ENCODE measurements at regions of chr9 and their contacts with region 1.

Region 1: GRCh38 chr9:90870621-90871326 is 69.2 kb downstream of the SYK start:
- DNase-seq: no peak
- ATAC-seq: no peak
- H3K4me3 Mint-ChIP-seq: no peak overlapping the region
- H3K27ac Mint-ChIP-seq: peak overlapping the region; percentile 74
- H3K4me1 Mint-ChIP-seq: peaks cover 4% of the 10 kb centered on the region
- H3K27me3 Mint-ChIP-seq: no peaks in the 10 kb centered on the region
- CTCF ChIP-seq: peak; percentile 97

Region 2: GRCh38 chr9:90322296-90322695 is 548.5 kb before region 1 on chr9:
- CTCF ChIA-PET with region 1: no interaction called
- POLR2A ChIA-PET with region 1: no interaction called
- intact Hi-C with region 1: loop called (anchors 5 kb)
- DNase-seq: no peak
- ATAC-seq: no peak
- H3K4me3 Mint-ChIP-seq: no peak overlapping the region
- H3K27ac Mint-ChIP-seq: no peak overlapping the region
- H3K4me1 Mint-ChIP-seq: no peaks in the 10 kb centered on the region
- H3K27me3 Mint-ChIP-seq: peaks cover 16% of the 10 kb centered on the region
- CTCF ChIP-seq: no peak

Region 3: GRCh38 chr9:90385146-90385545 is 485.6 kb before region 1 on chr9:
- CTCF ChIA-PET with region 1: no interaction called
- POLR2A ChIA-PET with region 1: no interaction called
- intact Hi-C with region 1: loop called (anchors 10 kb)
- DNase-seq: no peak
- ATAC-seq: no peak
- H3K4me3 Mint-ChIP-seq: no peak overlapping the region
- H3K27ac Mint-ChIP-seq: no peak overlapping the region
- H3K4me1 Mint-ChIP-seq: no peaks in the 10 kb centered on the region
- H3K27me3 Mint-ChIP-seq: peaks cover 9% of the 10 kb centered on the region
- CTCF ChIP-seq: no peak

Measured in activated B cell treated with CpG ODN at 0.5 μM for 24 hours (primary cell).